Mammary epithelial cell (primary cell): ENCODE measurements at regions of chr6 and their contacts with region 1.

Region 1: DNA sequence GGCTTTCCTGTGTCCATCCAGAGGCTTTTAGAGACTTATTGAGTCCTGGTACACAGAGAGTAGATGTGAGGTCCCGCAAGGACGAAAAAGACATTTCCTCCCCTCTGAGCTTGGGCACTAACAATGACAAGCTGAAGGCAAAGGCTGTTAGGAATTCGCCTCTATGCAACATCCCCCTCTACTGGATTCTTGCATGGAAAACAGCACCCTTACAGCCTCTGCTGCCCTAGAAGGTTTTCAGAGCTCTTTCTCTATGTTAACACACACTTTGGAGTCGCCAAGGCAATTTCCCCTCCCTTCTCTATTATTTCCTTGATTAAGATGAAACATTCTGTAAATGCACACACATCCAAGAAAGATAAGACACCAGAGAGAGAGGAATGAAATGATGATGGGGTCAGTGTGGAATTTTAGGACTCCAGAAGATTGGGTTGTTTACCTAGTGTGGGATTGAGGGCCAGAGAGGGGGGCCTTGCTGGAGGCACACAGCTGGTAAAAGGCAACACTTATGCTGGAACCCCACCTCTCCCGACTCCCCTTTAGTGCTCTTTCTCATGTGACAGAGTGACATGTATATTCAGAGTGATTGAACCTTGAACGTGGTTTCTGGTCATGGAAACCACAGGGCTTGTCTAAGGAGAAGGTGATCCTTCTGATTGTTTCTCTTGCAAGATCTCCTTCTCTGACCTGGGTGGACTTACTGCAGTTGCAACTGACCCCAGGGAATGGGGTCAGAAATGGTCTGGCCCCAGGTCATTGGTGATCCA is 300.7 kb downstream of the CLIC5 start:
- DNase-seq: peak; percentile 64
- H3K4me3 ChIP-seq: no peak overlapping the region
- H3K27ac ChIP-seq: no peak overlapping the region
- H3K4me1 ChIP-seq: no peaks in the 10 kb centered on the region
- H3K27me3 ChIP-seq: no peaks in the 10 kb centered on the region
- CTCF ChIP-seq: peak; percentile 88 to 94

Region 2: DNA sequence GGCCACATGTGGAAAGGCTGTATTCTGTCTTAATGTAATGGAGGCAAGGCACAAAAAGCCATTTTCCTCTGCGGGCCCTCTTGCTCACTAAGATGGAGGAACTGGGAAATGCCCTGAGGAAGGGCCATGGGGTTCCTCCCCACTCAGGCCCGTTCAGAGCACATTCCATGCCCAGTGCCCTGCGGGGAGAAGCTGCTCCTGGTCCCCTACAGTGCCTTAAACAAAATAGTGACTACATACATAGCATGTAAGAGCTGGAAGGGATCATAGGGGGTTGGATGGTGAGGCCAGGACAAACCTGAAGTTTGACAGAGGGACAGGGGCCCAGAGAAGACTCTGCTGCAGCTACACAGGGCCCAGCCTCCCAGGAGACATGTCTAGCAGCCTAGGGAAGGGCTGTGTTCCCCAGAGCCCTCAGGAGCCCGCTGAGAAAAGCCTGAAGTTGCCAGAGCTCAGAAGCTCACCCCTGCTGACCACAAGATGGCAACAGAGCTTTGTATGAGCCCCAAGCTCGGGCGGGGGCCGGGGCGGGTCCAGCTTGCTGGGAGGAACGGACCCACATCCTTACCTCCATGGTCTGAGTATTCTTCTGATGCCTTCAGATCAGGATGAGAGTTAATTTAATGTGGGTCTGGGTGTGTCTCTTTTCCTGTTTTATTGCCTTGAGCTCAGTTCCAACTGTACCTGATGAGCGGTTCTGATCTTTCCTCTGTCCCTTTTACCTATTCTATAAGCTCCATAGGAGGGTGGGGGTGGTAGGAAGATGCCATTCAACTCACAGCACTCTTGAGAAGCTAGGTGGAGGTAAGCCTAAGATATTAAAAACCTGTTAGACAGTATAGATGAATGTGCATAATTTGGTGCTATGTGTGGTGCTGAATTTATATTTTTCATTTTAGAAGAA is 1084.5 kb before region 1 on chr6:
- CTCF ChIA-PET with region 1: interaction called, 17 read pairs
- dilution Hi-C with region 1: no loop called
- in situ Hi-C with region 1: no loop called
- intact Hi-C with region 1: loop called (anchors 1 kb)
- DNase-seq: peak; percentile 33
- H3K4me3 ChIP-seq: no peak overlapping the region
- H3K27ac ChIP-seq: no peak overlapping the region
- H3K4me1 ChIP-seq: no peaks in the 10 kb centered on the region
- H3K27me3 ChIP-seq: no peaks in the 10 kb centered on the region
- CTCF ChIP-seq: peak; percentile 46 to 74

Region 3: DNA sequence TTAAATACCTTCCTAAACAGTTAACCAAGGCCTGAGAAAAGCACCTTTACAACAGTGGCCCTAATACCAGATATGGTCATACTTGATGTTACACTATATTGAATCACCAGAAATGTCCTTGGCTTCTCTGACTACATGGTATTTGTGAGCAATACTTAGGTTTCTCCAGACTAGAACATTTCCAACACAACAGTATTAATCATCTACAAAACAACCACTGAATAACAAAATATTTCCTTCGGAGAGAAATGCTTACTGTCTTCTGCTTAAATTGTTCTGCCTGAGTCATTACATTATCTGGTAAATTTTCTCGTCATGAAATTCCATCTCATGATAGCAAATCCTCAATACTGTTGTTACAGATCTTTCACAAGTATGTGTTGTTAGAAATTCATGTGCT is 639.7 kb before region 1 on chr6:
- CTCF ChIA-PET with region 1: no interaction called
- dilution Hi-C with region 1: no loop called
- in situ Hi-C with region 1: loop called in 1 of 2 experiments (anchors 25 kb)
- intact Hi-C with region 1: no loop called
- DNase-seq: peak; percentile 96
- H3K4me3 ChIP-seq: no peak overlapping the region
- H3K27ac ChIP-seq: peak overlapping the region; percentile 95
- H3K4me1 ChIP-seq: peaks cover 13% of the 10 kb centered on the region
- H3K27me3 ChIP-seq: no peaks in the 10 kb centered on the region
- CTCF ChIP-seq: no peak

Region 4: GRCh38 chr6:45377554-45378333 is 337.2 kb before region 1 on chr6 and contains the start of gene SUPT3H:
- CTCF ChIA-PET with region 1: no interaction called
- dilution Hi-C with region 1: no loop called
- in situ Hi-C with region 1: no loop called
- intact Hi-C with region 1: loop called (anchors 2 kb)
- DNase-seq: peak; percentile 90
- H3K4me3 ChIP-seq: peak within 1 kb of the TSS; percentile 72 to 83 (median 79)
- H3K27ac ChIP-seq: peak within 1 kb of the TSS; percentile 81
- H3K4me1 ChIP-seq: peaks cover 15% of the 10 kb centered on the region
- H3K27me3 ChIP-seq: no peaks in the 10 kb centered on the region
- CTCF ChIP-seq: peak in 1 of 2 donors; percentile 48
- total RNA-seq, gene SUPT3H: 7.3 to 8.3 TPM

Region 5: GRCh38 chr6:45445749-45446549 is 269.0 kb before region 1 on chr6:
- CTCF ChIA-PET with region 1: no interaction called
- dilution Hi-C with region 1: no loop called
- in situ Hi-C with region 1: no loop called
- intact Hi-C with region 1: loop called (anchors 1 kb)
- DNase-seq: peak; percentile 95
- H3K4me3 ChIP-seq: peak overlapping the region in 1 of 3 experiments; percentile 11
- H3K27ac ChIP-seq: peak overlapping the region; percentile 51
- H3K4me1 ChIP-seq: peaks cover 20% of the 10 kb centered on the region
- H3K27me3 ChIP-seq: no peaks in the 10 kb centered on the region
- CTCF ChIP-seq: no peak

Region 6: GRCh38 chr6:45619994-45620471 is 94.9 kb before region 1 on chr6:
- CTCF ChIA-PET with region 1: interaction called, 4 read pairs
- dilution Hi-C with region 1: no loop called
- in situ Hi-C with region 1: no loop called
- intact Hi-C with region 1: loop called (anchors 2 kb)
- DNase-seq: no peak
- H3K4me3 ChIP-seq: no peak overlapping the region
- H3K27ac ChIP-seq: no peak overlapping the region
- H3K4me1 ChIP-seq: peaks cover 18% of the 10 kb centered on the region
- H3K27me3 ChIP-seq: no peaks in the 10 kb centered on the region
- CTCF ChIP-seq: no peak